Activated CD4-positive, alpha-beta T cell treated with anti-CD3 and anti-CD28 coated beads, Interleukin-2, amount 10 ng/mL, durations not matched to agents 24 days and 14 days (primary cell): ENCODE measurements at regions of chr16 and their contacts with region 1.

Region 1: DNA sequence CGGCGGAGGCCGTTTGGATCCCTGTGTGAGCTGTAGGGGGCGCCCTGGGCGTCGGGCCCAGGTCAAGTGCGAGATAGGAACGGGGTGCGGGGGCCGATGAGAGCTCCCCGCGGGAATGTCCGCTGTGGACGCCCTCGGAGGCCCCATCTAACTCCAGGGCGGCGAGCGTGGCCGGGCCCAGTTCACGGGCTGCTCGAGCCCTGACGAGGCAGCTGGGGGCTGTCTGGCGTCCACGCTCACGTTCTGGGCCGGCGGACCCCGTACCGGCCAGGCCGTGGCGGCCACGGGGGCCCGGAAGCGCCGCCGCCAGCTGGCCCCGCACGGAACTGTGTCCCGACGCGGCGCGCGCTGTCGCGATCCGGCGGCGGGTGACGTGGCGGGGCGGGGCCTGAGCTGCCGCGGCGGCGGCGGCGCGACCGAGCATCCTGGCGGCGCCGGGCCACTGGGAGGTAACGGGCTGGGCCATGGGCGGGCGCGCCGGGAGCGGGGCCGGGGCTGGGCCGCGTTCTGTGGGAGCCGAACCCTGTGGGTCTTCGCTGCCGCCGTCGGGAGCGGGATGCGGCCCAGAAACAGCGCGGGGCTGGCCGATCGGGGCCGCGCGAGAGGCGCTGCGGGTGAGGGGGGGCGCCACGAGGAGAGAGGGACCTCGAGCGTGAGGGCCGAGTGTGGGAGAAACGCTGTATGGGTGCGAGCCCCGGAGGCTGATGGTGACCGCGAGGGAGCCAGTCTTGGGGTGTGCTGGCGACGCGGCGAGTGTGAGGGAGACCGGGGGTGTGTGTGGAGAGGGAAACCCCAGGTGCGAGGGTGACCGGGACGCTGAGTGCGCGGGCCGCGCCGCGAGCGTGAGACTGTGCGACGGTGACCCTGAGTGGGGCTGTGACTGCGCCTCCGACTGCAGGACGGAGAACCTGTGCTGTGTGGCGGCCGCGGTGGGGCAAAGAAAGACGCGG is at the start of gene SLC7A6:
- DNase-seq: peak; percentile 96
- H3K4me3 Mint-ChIP-seq: peak within 1 kb of the TSS; percentile 98
- H3K27ac Mint-ChIP-seq: peak within 1 kb of the TSS; percentile 99
- H3K4me1 Mint-ChIP-seq: peaks cover 45% of the 10 kb centered on the region
- H3K27me3 Mint-ChIP-seq: no peaks in the 10 kb centered on the region
- total RNA-seq, gene SLC7A6: 103 and 106 TPM in 2 replicates

Region 2: DNA sequence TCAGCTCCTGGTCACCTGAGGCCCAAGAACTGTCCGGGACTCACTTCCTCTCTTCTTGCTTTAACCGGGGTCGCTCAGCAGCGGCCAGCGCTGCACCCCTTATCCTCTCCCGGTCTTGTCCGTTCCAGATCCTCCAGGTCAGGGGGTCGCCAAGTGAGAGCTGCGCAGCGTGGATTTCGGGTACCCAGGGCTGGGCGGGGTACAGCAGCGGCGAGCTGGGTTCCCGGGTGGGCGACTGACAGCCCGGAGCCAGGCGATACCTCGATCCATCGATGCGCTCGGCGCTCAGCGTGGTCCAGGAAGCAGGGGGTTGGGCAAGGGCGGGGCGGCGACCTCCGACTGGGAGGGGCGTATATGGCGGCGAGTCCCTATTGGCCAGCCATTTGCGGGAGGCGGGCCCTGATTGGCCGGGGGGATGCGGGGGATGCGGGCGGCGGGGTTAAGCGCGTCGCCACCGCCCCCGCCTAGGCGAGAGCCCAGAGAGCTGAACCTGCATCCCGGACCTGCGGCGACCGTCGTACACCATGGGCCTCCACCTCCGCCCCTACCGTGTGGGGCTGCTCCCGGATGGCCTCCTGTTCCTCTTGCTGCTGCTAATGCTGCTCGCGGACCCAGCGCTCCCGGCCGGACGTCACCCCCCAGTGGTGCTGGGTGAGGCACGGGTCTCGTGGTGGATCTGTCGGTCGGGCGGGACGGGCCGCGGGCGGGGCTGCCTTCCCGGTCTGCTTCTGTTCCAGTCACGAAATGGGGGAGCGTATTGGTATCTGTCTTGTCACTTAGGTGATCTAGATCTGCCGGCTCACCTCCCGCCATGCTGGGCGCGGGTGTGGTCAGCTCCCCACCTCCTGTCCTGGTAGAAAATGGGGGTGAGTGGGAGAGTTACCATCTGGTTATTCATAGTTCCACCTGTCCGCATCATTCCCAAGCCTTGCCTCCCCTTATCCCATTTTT is 19.2 kb before region 1 on chr16 and contains the start of gene PLA2G15:
- intact Hi-C with region 1: loop called (anchors 1 kb)
- DNase-seq: peak; percentile 98
- H3K4me3 Mint-ChIP-seq: peak within 1 kb of the TSS; percentile 100
- H3K27ac Mint-ChIP-seq: peak within 1 kb of the TSS; percentile 85
- H3K4me1 Mint-ChIP-seq: peaks cover 23% of the 10 kb centered on the region
- H3K27me3 Mint-ChIP-seq: peaks cover 2% of the 10 kb centered on the region
- total RNA-seq, gene PLA2G15: 7.2 and 8.4 TPM in 2 replicates

Region 3: GRCh38 chr16:68289621-68290329 is 25.4 kb after region 1 on chr16:
- intact Hi-C with region 1: loop called (anchors 1 kb)
- DNase-seq: peak; percentile 86
- H3K4me3 Mint-ChIP-seq: peak overlapping the region; percentile 72
- H3K27ac Mint-ChIP-seq: peak overlapping the region; percentile 94
- H3K4me1 Mint-ChIP-seq: peaks cover 72% of the 10 kb centered on the region
- H3K27me3 Mint-ChIP-seq: no peaks in the 10 kb centered on the region

Region 4: GRCh38 chr16:68319185-68319908 is 54.9 kb after region 1 on chr16:
- intact Hi-C with region 1: loop called (anchors 2 kb)
- DNase-seq: peak; percentile 69
- H3K4me3 Mint-ChIP-seq: peak overlapping the region; percentile 30
- H3K27ac Mint-ChIP-seq: peak overlapping the region; percentile 76
- H3K4me1 Mint-ChIP-seq: peaks cover 27% of the 10 kb centered on the region
- H3K27me3 Mint-ChIP-seq: no peaks in the 10 kb centered on the region

Region 5: GRCh38 chr16:68448360-68448970 is 184.1 kb after region 1 on chr16 and contains the start of gene SMPD3:
- intact Hi-C with region 1: loop called (anchors 2 kb)
- DNase-seq: peak; percentile 99
- H3K4me3 Mint-ChIP-seq: peak within 1 kb of the TSS; percentile 77
- H3K27ac Mint-ChIP-seq: peak within 1 kb of the TSS; percentile 60
- H3K4me1 Mint-ChIP-seq: peaks cover 11% of the 10 kb centered on the region
- H3K27me3 Mint-ChIP-seq: peaks cover 29% of the 10 kb centered on the region
- total RNA-seq, gene SMPD3: 0.09 and 0.40 TPM in 2 replicates